PC-9 (cell line): ENCODE measurements at regions of chr9 and their contacts with region 1.

Region 1: GRCh38 chr9:20684035-20684872 is at the start of gene FOCAD:
- DNase-seq: peak; percentile 78 to 92
- H3K4me3 ChIP-seq: peak within 1 kb of the TSS; percentile 92
- H3K27ac ChIP-seq: peak within 1 kb of the TSS; percentile 72
- H3K4me1 ChIP-seq: peaks cover 14% of the 10 kb centered on the region
- H3K27me3 ChIP-seq: no peaks in the 10 kb centered on the region
- CTCF ChIP-seq: no peak
- total RNA-seq, gene FOCAD: 12.4 and 17.1 TPM in 2 replicates

Region 2: DNA sequence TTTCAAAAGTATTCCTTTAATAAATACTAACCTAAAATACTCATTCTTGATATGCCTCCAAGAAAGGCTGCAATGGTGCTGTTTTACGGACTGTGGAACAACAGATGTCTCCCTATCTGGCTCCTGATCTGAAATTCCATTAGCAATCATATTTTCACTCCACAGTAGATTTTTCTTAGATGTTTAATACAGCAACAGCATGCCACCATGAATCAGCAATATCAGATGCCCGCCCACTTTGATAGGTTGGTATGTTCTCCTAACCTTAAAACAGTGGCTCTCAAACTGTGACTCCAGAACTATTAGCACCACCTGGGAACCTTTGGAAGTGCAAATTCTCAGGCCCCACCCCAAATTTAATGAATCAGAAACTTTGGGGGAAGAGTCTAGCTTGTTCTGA is 172.1 kb before region 1 on chr9:
- CTCF ChIA-PET with region 1: no interaction called
- POLR2A ChIA-PET with region 1: no interaction called
- intact Hi-C with region 1: loop called (anchors 10 kb)
- DNase-seq: peak; percentile 49 to 80
- H3K4me3 ChIP-seq: no peak overlapping the region
- H3K27ac ChIP-seq: peak overlapping the region; percentile 77
- H3K4me1 ChIP-seq: peaks cover 20% of the 10 kb centered on the region
- H3K27me3 ChIP-seq: no peaks in the 10 kb centered on the region
- CTCF ChIP-seq: no peak

Region 3: DNA sequence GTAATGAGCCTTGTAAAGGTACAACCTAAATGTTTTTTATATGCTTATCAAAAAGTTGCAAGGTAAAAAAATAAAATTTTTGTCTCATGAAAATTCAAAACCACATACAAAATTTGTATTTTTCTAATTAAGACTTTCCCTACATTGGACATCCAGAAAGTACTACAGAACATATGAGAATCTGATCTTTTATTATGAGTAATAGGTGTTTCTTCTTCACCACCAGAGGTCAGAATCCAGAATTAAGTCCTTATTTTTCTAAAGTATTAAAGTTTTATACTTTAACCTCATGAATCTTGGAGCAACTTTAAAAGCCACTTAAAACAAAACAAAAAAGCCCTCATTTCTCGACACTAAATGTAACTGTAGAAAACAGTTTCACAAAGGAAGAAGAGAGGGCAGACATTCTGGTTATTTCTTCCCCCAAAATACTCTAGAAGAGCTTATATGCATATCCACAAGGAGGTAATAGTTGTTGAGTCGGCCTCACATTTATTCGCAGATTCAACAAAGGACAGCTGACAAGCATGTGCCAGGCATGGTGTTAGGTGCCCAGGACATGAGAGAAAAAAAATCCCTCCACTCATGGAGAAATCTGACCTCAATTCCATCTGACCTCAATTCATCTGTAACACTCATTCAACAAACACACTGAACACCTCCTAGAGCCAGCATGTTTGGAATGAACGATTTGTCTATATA is 131.2 kb before region 1 on chr9:
- CTCF ChIA-PET with region 1: no interaction called
- POLR2A ChIA-PET with region 1: no interaction called
- intact Hi-C with region 1: no loop called
- DNase-seq: no peak
- H3K4me3 ChIP-seq: no peak overlapping the region
- H3K27ac ChIP-seq: peak overlapping the region; percentile 99
- H3K4me1 ChIP-seq: peaks cover 50% of the 10 kb centered on the region
- H3K27me3 ChIP-seq: no peaks in the 10 kb centered on the region
- CTCF ChIP-seq: 0 out of 2 replicates have a peak, but pooled peaks have one; percentile 30

Region 4: GRCh38 chr9:20728493-20729220 is 44.4 kb after region 1 on chr9:
- CTCF ChIA-PET with region 1: no interaction called
- POLR2A ChIA-PET with region 1: no interaction called
- intact Hi-C with region 1: loop called (anchors 5 kb)
- DNase-seq: no peak
- H3K4me3 ChIP-seq: no peak overlapping the region
- H3K27ac ChIP-seq: no peak overlapping the region
- H3K4me1 ChIP-seq: no peaks in the 10 kb centered on the region
- H3K27me3 ChIP-seq: no peaks in the 10 kb centered on the region
- CTCF ChIP-seq: no peak

Region 5: GRCh38 chr9:20744036-20744630 is 59.9 kb after region 1 on chr9:
- CTCF ChIA-PET with region 1: no interaction called
- POLR2A ChIA-PET with region 1: interaction called, 10 read pairs
- intact Hi-C with region 1: no loop called
- DNase-seq: no peak
- H3K4me3 ChIP-seq: no peak overlapping the region
- H3K27ac ChIP-seq: no peak overlapping the region
- H3K4me1 ChIP-seq: no peaks in the 10 kb centered on the region
- H3K27me3 ChIP-seq: no peaks in the 10 kb centered on the region
- CTCF ChIP-seq: no peak